WTC11 (cell line): ENCODE measurements at regions of chr7 and their contacts with region 1.

Region 1: DNA sequence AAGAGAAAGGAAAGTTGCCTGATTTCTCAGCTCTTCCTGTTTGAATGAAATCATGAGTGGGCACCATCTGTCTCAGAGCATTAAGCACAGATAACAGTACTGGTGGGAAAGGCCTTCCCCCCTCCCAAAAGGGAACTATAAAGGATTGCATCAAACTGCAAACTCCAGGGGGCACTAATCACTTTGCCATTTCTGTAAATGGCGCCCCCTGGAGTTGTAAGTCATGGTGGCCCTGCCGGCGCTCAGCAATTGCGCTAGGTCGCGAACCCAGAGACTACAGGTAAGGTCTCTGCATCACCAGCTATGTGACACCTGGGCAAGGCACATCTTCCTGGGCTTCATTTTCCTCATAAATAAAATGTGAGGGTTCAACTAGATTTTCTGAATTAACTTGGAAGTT is 11.1 kb downstream of the LRRC4 start:
- DNase-seq: peak; percentile 74
- ATAC-seq: peak; percentile 38
- H3K4me3 Mint-ChIP-seq: no peak overlapping the region
- H3K27ac Mint-ChIP-seq: no peak overlapping the region
- H3K4me1 Mint-ChIP-seq: peaks cover 78% of the 10 kb centered on the region
- H3K27me3 Mint-ChIP-seq: no peaks in the 10 kb centered on the region
- CTCF ChIP-seq: peak; percentile 83

Region 2: DNA sequence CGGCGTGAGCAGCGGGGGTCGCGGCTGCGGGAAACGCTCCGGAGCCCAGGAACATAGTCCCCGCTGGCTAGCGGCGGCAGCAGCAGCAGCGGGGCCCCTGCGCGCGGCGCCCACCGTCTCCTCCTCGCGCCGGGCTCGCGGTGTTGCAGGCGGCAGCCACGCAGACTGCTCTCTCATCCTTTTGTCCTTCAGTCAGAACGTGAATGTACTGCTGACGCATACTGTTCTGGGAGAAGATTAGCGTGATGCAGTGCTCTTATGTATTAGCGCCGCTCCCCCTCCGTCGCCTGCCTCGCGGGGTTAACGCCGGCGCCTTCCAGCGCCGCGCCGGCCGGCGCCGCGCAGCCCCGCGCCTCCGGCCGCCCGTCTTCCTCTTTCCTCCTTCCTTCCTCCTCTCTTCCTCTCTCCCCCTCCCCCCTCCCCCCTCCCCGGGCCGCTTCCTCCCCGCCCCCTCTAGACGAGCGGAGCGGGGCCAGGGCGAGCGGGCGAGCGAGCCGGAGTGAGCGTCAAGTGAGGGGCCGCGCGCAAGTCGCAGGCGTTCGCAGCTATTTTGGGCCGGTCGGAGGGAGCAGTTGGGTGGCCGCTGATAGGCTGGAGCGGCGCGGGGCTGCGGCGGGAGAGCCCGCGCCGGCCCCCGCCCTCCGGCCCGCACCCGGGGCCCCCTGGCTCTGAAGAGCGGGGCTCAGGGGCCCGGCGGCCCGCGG is 11.9 kb after region 1 on chr7:
- CTCF ChIA-PET with region 1: interaction called, 18 read pairs
- POLR2A ChIA-PET with region 1: interaction called, 6 read pairs
- DNase-seq: peak; percentile 56
- ATAC-seq: peak; percentile 29
- H3K4me3 Mint-ChIP-seq: peak overlapping the region; percentile 74
- H3K27ac Mint-ChIP-seq: no peak overlapping the region
- H3K4me1 Mint-ChIP-seq: peaks cover 33% of the 10 kb centered on the region
- H3K27me3 Mint-ChIP-seq: peaks cover 38% of the 10 kb centered on the region
- CTCF ChIP-seq: no peak